Head of caudate nucleus (tissue), 42 donors: ENCODE measurements at regions of chr3 and their contacts with region 1.

Region 1: DNA sequence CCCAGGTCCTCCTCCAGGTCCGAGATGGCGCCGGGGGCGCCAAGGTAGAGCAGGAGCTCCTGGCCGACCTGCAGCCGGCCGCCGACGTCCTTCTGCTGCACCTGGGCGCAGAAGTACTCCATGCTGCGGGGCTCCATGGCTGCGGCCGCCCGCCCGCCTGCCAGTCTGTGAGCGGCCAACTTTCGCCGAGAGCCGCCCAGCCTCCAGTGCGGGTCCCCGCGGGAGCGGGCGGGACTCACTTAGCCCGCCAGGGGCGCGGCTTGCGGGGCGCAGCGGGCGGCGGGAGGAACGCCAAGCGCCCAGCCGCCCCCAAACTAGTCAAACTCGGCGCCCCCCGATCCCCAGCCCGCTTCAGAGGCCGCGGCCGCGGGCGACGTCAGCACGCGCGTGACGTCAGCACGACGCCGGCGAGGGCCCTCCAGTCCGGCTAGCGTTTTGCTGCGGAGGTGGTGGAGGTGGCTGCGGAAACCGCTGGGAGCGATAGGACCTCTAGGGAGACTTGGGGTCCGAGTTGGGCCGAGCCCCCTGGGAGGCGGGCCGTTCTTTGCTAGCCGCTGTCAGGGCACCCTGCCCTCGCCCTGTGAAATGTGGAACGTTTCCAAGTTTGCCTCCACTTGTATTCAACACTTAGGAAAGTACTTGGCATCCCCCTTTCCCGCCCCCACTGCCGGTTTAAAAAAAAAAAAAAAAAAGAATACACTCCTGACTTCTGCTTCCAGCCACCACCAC is at the start of gene CLASP2:
- DNase-seq: peak; percentile 52 to 92 (median 84)

Region 2: DNA sequence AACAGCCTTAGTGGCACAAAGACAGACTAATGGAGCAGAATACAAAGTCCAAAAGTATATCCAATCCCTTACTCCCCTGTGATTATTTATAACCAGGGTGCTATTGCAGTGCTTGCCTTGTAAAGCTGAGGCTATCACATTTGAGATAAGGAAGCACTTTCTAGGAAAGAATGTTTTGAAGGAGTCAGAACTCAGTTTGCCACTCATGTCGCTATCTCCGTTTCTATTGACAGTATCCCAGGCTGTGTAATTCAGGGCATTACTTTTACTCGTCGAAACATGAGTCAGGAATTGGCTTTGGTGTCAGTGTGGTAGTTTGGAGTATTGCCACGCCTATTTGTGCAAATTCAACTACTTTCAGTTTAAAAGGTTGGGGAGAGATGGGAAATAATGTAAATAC is 362.4 kb before region 1 on chr3:
- intact Hi-C with region 1: no loop called
- DNase-seq: no peak

Region 3: DNA sequence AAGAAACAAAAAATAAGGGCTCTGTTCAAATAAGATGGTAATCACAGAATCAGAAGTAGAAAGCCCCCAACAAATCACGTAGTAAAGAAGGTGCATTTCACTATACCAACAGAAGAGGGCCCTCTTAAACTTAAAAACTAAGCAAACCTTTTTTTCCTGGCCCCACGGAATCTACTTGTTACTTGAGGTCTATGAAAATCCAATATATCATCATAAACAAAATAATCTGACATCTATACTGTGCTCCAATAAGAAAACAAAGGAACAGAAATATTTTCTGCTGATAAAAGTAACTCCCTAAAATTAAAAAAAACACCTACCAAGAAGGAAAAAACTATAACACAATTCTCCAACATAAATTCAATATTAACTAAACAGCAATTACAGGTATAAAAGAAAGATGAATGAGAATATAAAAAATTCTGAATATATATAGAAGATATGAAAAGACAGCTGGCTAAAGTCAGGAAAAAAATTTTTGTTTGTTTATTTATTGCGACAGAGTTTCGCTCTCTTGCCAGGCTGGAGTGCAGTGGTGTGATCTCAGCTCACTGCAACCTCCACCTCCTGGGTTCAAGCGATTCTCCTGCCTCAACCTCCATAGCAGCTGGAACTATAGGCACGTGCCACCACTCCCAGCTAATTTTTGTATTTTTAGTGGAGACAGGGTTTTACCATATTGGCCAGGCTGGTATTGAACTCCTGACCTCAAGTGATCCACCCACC is 81.7 kb before region 1 on chr3:
- intact Hi-C with region 1: loop called (anchors 5 kb)
- DNase-seq: peak in 4 of 42 donors; percentile 16 to 43 (median 30)

Region 4: DNA sequence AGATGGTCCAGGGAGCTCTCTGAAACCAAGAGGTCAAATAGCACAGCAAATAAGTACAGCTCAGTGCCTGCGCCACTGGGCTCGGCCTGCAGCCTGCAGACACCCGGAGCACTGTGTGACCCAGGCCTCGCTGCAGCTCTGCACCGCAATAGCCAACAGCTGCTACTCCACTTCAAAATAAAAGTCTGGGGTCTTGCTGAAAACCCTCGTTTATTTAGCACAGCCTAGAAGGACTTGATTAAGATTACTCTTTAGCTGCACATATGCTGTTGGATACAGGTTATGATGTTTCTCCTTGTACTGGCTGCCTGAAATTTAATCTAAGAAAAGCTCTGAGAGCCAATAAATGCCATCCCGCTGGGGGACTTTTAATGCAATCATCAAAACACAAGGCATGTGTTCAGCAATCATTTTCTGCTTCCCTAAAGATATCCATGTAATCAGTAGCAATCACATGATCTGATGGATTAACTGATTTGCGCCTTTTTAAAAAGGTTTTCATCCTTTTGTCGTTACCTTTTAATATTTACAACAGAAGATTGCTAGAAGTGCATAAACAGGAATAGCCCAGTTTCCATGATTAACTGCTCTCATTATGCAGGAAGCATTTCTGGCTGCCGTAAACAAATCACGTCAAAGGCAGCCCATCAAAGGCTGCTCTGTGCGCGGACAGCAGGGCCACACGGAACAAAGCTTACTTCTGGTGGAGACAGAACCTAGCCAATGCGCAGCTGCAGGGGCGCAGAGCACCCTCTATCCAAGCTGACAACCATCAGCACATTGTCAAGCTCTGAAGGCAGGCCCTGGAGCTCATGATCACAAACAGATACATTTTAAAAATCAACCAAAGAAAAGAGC is 58.8 kb before region 1 on chr3:
- intact Hi-C with region 1: loop called (anchors 5 kb)
- DNase-seq: peak; percentile 82 to 97 (median 93)

Region 5: GRCh38 chr3:33773637-33774036 is 55.6 kb after region 1 on chr3:
- intact Hi-C with region 1: loop called (anchors 10 kb)
- DNase-seq: no peak

Region 6: DNA sequence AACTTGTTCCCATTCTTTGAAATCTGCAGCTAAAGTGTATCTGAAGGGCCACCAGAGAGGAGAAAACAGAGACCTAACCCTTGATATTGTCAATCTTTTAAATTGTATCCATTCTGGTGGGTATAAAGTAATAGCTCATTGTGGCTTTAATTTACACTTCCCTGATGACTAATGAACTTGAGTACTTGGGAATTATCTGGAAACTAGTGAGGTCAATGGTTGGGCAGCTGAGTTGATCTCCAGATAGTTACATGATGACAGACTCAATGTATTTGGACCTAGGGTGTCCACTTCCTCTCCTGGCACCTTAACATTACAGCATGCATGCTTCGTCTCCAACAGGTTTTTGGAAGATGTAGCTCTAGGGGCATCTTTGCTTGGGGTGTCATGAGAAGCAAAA is 275.6 kb after region 1 on chr3:
- intact Hi-C with region 1: no loop called
- DNase-seq: no peak